CD4-positive, alpha-beta memory T cell (primary cell): ENCODE measurements at regions of chr4 and their contacts with region 1.

Region 1: DNA sequence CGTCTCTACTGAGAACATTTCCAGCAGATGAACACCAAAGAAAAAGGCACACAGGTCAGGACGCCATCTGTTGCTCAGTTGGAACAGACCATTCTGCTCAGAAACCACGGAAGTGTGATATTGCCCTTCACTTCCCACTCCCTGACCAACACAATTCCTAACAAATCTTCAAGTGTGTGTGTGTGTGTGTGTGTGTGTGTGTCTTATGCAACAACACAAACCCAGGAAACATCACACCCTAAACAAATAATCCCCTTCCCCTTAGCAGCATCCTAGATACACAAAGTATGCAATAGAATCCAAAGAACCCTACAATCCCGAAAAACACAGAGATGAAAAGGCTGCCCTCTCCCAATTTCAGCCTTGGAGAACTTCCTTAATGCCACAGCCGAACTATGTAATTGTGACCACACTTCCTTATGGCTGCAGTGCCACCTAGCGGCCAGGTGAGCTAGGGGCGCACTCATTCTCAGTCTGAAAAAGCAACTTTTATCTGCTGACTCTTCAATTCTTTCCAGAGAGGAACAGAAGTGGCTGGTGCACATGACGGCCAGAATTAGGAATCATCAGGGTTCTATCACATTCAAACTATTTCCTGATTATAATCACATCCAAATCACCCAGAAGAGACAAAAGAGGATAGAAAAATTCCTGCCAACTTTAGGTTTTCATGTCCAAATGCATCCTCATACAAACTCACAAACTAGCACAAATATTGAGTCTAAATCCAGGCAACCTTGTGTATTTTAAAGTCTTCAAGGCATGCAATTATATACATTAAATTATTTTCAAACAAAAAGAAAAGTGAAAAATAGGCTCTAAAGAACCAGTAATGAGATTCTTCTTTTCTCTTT is 164.9 kb downstream of the DHX15 start:
- DNase-seq: peak in 4 of 5 donors; percentile 39 to 42 (median 40)
- H3K4me3 ChIP-seq: no peak overlapping the region
- H3K4me3 Mint-ChIP-seq: peak overlapping the region in 5 of 8 donors; percentile 13 to 74 (median 56)
- H3K27ac ChIP-seq: no peak overlapping the region
- H3K27ac Mint-ChIP-seq: peak overlapping the region in 1 of 7 donors; percentile 33
- H3K4me1 ChIP-seq: no peaks in the 10 kb centered on the region
- H3K4me1 Mint-ChIP-seq: peaks cover 4 to 6% (median 5%) of the 10 kb centered on the region in 4 donors
- H3K27me3 ChIP-seq: no peaks in the 10 kb centered on the region
- H3K27me3 Mint-ChIP-seq: peaks cover 11 to 12% of the 10 kb centered on the region in 2 donors

Region 2: GRCh38 chr4:22897520-22898108 is 1521.8 kb before region 1 on chr4:
- CTCF ChIA-PET with region 1: interaction called, 33 read pairs
- POLR2A ChIA-PET with region 1: no interaction called
- intact Hi-C with region 1: no loop called
- DNase-seq: peak in 3 of 5 donors; percentile 2 to 12 (median 3)
- H3K4me3 ChIP-seq: no peak overlapping the region
- H3K4me3 Mint-ChIP-seq: no peak overlapping the region
- H3K27ac ChIP-seq: no peak overlapping the region
- H3K27ac Mint-ChIP-seq: no peak overlapping the region
- H3K4me1 ChIP-seq: no peaks in the 10 kb centered on the region
- H3K4me1 Mint-ChIP-seq: no peaks in the 10 kb centered on the region
- H3K27me3 ChIP-seq: no peaks in the 10 kb centered on the region
- H3K27me3 Mint-ChIP-seq: peaks cover 0 to 2% of the 10 kb centered on the region in 2 donors

Region 3: DNA sequence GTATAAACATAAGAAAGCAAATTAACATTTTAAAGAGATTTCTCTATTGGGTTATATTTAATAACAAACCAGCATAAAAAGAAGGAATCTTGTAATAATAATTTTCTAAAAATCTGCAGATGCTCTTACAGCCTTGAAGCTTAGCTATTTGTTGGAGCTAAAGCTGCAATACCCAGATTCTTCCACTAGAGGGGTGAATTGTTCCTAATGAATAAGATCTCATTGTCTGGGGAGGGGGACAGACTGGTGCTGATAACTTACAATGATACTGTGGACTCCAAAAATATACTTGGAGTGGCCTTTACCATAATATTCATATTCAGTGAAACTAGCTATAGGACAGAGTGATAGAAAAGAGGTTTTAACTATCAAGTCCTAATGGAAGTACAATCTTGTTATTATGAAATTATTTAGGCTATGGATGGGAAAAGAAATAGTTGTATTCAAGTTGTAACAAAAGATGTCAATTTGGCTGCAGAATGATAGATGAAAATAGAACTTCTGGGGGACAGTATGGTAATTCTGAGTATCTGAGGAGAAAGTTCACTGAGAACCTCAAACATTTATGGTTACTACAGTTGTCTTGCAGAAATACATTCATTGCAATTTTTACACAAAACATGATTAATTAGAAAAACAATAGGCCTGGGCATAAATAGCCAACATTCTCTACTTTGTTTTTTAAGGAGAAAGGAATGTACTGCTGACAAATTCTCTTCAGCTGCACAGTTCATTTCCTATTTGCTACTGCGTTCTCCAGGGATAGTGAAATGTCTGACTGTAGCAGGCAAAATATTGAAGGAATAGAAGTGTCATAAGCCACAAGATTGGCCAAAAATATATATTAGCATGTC is 1283.4 kb before region 1 on chr4:
- CTCF ChIA-PET with region 1: interaction called, 19 read pairs
- POLR2A ChIA-PET with region 1: no interaction called
- intact Hi-C with region 1: no loop called
- DNase-seq: peak in 4 of 5 donors; percentile 2 to 7 (median 4)
- H3K4me3 ChIP-seq: no peak overlapping the region
- H3K4me3 Mint-ChIP-seq: no peak overlapping the region
- H3K27ac ChIP-seq: no peak overlapping the region
- H3K27ac Mint-ChIP-seq: no peak overlapping the region
- H3K4me1 ChIP-seq: no peaks in the 10 kb centered on the region
- H3K4me1 Mint-ChIP-seq: no peaks in the 10 kb centered on the region
- H3K27me3 ChIP-seq: no peaks in the 10 kb centered on the region
- H3K27me3 Mint-ChIP-seq: no peaks in the 10 kb centered on the region

Region 4: GRCh38 chr4:24070117-24070516 is 349.3 kb before region 1 on chr4:
- CTCF ChIA-PET with region 1: no interaction called
- POLR2A ChIA-PET with region 1: no interaction called
- intact Hi-C with region 1: no loop called
- DNase-seq: no peak
- H3K4me3 ChIP-seq: no peak overlapping the region
- H3K4me3 Mint-ChIP-seq: no peak overlapping the region
- H3K27ac ChIP-seq: no peak overlapping the region
- H3K27ac Mint-ChIP-seq: no peak overlapping the region
- H3K4me1 ChIP-seq: no peaks in the 10 kb centered on the region
- H3K4me1 Mint-ChIP-seq: no peaks in the 10 kb centered on the region
- H3K27me3 ChIP-seq: no peaks in the 10 kb centered on the region
- H3K27me3 Mint-ChIP-seq: no peaks in the 10 kb centered on the region

Region 5: GRCh38 chr4:24121395-24122175 is 297.8 kb before region 1 on chr4:
- CTCF ChIA-PET with region 1: no interaction called
- POLR2A ChIA-PET with region 1: no interaction called
- intact Hi-C with region 1: no loop called
- DNase-seq: no peak
- H3K4me3 ChIP-seq: no peak overlapping the region
- H3K4me3 Mint-ChIP-seq: no peak overlapping the region
- H3K27ac ChIP-seq: no peak overlapping the region
- H3K27ac Mint-ChIP-seq: no peak overlapping the region
- H3K4me1 ChIP-seq: no peaks in the 10 kb centered on the region
- H3K4me1 Mint-ChIP-seq: no peaks in the 10 kb centered on the region
- H3K27me3 ChIP-seq: no peaks in the 10 kb centered on the region
- H3K27me3 Mint-ChIP-seq: no peaks in the 10 kb centered on the region

Region 6: GRCh38 chr4:24244663-24245490 is 174.5 kb before region 1 on chr4:
- CTCF ChIA-PET with region 1: no interaction called
- POLR2A ChIA-PET with region 1: no interaction called
- intact Hi-C with region 1: no loop called
- DNase-seq: no peak
- H3K4me3 ChIP-seq: no peak overlapping the region
- H3K4me3 Mint-ChIP-seq: no peak overlapping the region
- H3K27ac ChIP-seq: no peak overlapping the region
- H3K27ac Mint-ChIP-seq: no peak overlapping the region
- H3K4me1 ChIP-seq: no peaks in the 10 kb centered on the region
- H3K4me1 Mint-ChIP-seq: no peaks in the 10 kb centered on the region
- H3K27me3 ChIP-seq: no peaks in the 10 kb centered on the region
- H3K27me3 Mint-ChIP-seq: no peaks in the 10 kb centered on the region

Region 7: GRCh38 chr4:24403265-24403664 is 16.1 kb before region 1 on chr4:
- CTCF ChIA-PET with region 1: interaction called, 11 read pairs
- POLR2A ChIA-PET with region 1: no interaction called
- intact Hi-C with region 1: no loop called
- DNase-seq: no peak
- H3K4me3 ChIP-seq: no peak overlapping the region
- H3K4me3 Mint-ChIP-seq: no peak overlapping the region
- H3K27ac ChIP-seq: no peak overlapping the region
- H3K27ac Mint-ChIP-seq: no peak overlapping the region
- H3K4me1 ChIP-seq: no peaks in the 10 kb centered on the region
- H3K4me1 Mint-ChIP-seq: no peaks in the 10 kb centered on the region
- H3K27me3 ChIP-seq: no peaks in the 10 kb centered on the region
- H3K27me3 Mint-ChIP-seq: peaks cover 3 to 4% of the 10 kb centered on the region in 2 donors

Region 8: GRCh38 chr4:24433515-24434214 is 14.3 kb after region 1 on chr4:
- CTCF ChIA-PET with region 1: interaction called, 30 read pairs
- POLR2A ChIA-PET with region 1: no interaction called
- intact Hi-C with region 1: no loop called
- DNase-seq: no peak
- H3K4me3 ChIP-seq: no peak overlapping the region
- H3K4me3 Mint-ChIP-seq: no peak overlapping the region
- H3K27ac ChIP-seq: no peak overlapping the region
- H3K27ac Mint-ChIP-seq: no peak overlapping the region
- H3K4me1 ChIP-seq: no peaks in the 10 kb centered on the region
- H3K4me1 Mint-ChIP-seq: no peaks in the 10 kb centered on the region
- H3K27me3 ChIP-seq: no peaks in the 10 kb centered on the region
- H3K27me3 Mint-ChIP-seq: peaks cover 12 to 17% of the 10 kb centered on the region in 2 donors